ENCODE measurements at regions of chr10 and their contacts with region 1.

Region 1: DNA sequence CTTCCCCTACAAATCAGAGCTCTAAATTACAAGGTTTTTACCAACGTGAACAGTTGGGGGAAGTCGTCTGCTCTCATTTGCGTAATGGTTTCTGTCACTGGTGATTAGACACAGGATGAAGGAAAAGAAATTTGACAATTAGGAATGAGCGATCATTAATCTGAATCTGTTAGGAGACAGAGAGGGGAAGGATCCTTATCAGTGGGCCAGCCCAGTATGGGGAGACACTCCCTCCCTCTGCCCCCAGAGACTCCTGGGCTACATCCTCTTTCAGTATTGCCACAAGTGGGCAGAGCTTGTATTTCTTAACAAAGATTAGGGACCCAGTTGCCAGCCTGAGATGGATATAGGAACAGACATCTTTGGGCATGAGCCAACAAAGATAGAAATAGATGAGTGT is 15.5 kb downstream of the HIF1AN start:
- DNase-seq: no peak
- ATAC-seq: no peak
- H3K4me3 Mint-ChIP-seq: no peak overlapping the region
- H3K27ac Mint-ChIP-seq: peak overlapping the region; percentile 9
- H3K4me1 Mint-ChIP-seq: peaks cover 20% of the 10 kb centered on the region
- H3K27me3 Mint-ChIP-seq: no peaks in the 10 kb centered on the region

Region 2: GRCh38 chr10:100479037-100479436 is 72.2 kb before region 1 on chr10:
- CTCF ChIA-PET with region 1: no interaction called
- POLR2A ChIA-PET with region 1: no interaction called
- DNase-seq: no peak
- ATAC-seq: no peak
- H3K4me3 Mint-ChIP-seq: no peak overlapping the region
- H3K27ac Mint-ChIP-seq: no peak overlapping the region
- H3K4me1 Mint-ChIP-seq: peaks cover 27% of the 10 kb centered on the region
- H3K27me3 Mint-ChIP-seq: peaks cover 13% of the 10 kb centered on the region

Region 3: GRCh38 chr10:100562008-100562711 is 11.0 kb after region 1 on chr10:
- CTCF ChIA-PET with region 1: interaction called, 14 read pairs
- POLR2A ChIA-PET with region 1: no interaction called
- DNase-seq: peak; percentile 83
- ATAC-seq: peak; percentile 95
- H3K4me3 Mint-ChIP-seq: no peak overlapping the region
- H3K27ac Mint-ChIP-seq: no peak overlapping the region
- H3K4me1 Mint-ChIP-seq: peaks cover 23% of the 10 kb centered on the region
- H3K27me3 Mint-ChIP-seq: peaks cover 27% of the 10 kb centered on the region

Region 4: GRCh38 chr10:100634034-100634433 is 82.8 kb after region 1 on chr10:
- CTCF ChIA-PET with region 1: no interaction called
- POLR2A ChIA-PET with region 1: no interaction called
- DNase-seq: no peak
- ATAC-seq: no peak
- H3K4me3 Mint-ChIP-seq: no peak overlapping the region
- H3K27ac Mint-ChIP-seq: no peak overlapping the region
- H3K4me1 Mint-ChIP-seq: no peaks in the 10 kb centered on the region
- H3K27me3 Mint-ChIP-seq: peaks cover 27% of the 10 kb centered on the region